OCI-LY7 (cell line): ENCODE measurements at regions of chr4 and their contacts with region 1.

Region 1: GRCh38 chr4:16443504-16444088 is 217.3 kb upstream of the TAPT1 start:
- DNase-seq: peak; percentile 43
- H3K4me3 ChIP-seq: no peak overlapping the region
- H3K27ac ChIP-seq: no peak overlapping the region
- H3K4me1 ChIP-seq: no peaks in the 10 kb centered on the region
- CTCF ChIP-seq: peak; percentile 83

Region 2: DNA sequence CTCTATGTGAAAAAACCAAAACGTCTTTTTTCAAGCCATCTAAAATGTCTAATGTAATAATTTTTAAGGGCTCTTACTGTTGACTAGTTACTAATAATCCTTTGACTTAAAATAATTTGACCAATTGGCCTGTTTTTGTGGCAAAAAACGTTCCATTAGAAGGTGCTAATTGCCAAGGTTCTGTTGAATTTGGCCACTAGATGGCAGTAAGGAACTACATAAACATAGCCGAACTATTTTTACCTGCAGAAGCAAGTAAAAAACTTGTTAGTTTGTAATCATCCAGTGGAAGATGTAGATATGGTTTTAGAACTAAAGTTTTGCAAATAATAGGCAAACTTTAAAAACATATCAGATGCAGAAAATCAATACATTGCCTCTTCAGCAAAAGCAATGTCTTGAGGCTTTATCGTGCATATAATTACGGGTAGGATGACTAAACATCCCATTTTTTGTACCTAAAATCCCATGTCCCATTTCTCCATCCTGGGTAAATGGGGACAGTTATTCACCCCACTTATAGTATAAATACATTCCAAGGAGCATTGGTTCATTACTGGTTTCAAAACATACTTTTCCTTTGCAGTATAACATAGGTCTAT is 417.3 kb before region 1 on chr4:
- CTCF ChIA-PET with region 1: no interaction called
- POLR2A ChIA-PET with region 1: interaction called, 4 read pairs
- intact Hi-C with region 1: loop called (anchors 5 kb)
- DNase-seq: peak; percentile 80
- H3K4me3 ChIP-seq: no peak overlapping the region
- H3K27ac ChIP-seq: no peak overlapping the region
- H3K4me1 ChIP-seq: no peaks in the 10 kb centered on the region
- CTCF ChIP-seq: peak; percentile 99

Region 3: GRCh38 chr4:16289897-16290554 is 153.6 kb before region 1 on chr4:
- CTCF ChIA-PET with region 1: interaction called, 4 read pairs
- POLR2A ChIA-PET with region 1: no interaction called
- intact Hi-C with region 1: loop called (anchors 1 kb)
- DNase-seq: peak; percentile 36
- H3K4me3 ChIP-seq: no peak overlapping the region
- H3K27ac ChIP-seq: no peak overlapping the region
- H3K4me1 ChIP-seq: no peaks in the 10 kb centered on the region
- CTCF ChIP-seq: peak; percentile 90